SK-N-SH (cell line): ENCODE measurements at regions of chr2 and their contacts with region 1.

Region 1: DNA sequence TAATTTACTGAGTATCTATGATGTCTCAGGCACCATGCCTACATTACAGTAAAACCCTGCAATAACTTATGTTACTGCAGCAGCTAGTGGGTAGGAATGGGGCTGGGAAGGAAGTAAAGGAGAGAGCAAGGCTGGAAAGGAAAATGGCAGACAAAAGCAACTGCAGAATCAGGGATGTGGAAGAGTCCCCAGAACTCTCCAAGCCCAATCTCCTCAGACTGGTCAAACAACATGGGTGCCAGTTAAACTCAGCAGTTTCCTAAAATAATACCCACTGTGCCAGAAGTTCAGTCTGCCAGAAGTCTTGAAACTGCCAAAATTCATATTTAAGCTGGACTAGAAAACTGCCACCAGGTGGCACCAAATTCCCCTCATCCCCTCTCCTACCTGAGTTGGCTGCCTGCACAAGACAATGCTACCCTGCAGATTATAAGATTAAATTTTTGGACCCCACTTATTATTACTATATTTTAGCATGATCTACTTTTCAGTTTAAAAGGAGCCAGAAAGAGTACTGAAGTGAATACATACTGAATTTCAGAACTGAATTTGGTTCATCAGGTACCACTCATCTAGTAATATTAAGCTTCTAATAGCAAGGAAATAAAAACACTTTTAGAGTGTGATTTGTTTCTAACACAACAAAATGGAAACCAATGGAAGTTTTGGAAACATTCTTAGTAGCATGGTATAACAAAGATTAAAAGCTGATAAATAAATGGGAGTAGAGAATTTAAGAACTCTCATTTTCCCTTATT is 86.8 kb upstream of the DNER start:
- DNase-seq: peak; percentile 61
- H3K4me3 ChIP-seq: no peak overlapping the region; a peak in 1 of 4 replicates
- H3K27ac ChIP-seq: peak overlapping the region in 1 of 2 experiments; percentile 40; a peak in 3 of 4 replicates
- H3K4me1 ChIP-seq: peaks cover 0 to 4% of the 10 kb centered on the region in 2 experiments; a peak in 1 of 4 replicates
- H3K27me3 ChIP-seq: no peaks in the 10 kb centered on the region
- CTCF ChIP-seq: peak; percentile 87
- EP300 ChIP-seq: no peak
- RAD21 ChIP-seq: peak; percentile 70

Region 2: DNA sequence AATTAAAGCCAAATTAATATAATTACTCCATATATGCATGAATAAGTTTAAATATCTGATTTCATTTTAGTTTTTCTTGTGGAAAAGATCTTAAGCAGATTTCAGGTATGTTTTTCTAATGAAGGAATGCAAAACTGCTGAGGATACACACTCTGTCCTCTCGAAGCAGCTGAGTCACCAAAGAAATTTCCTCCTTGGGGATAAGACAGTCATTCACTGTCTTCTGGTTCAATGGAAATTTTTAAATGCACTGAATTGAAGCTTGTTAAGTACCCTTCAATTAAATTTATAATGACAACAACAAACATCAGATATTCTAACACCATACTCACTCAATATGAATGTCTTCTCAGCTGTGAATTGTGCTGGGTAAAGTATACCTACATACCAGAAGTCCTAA is 14.7 kb after region 1 on chr2:
- CTCF ChIA-PET with region 1: interaction called, 81 read pairs
- POLR2A ChIA-PET with region 1: interaction called, 3 read pairs
- DNase-seq: no peak
- H3K4me3 ChIP-seq: no peak overlapping the region
- H3K27ac ChIP-seq: peak overlapping the region; percentile 20 to 78; a peak in 3 of 4 replicates
- H3K4me1 ChIP-seq: peaks cover 10 to 15% of the 10 kb centered on the region in 2 experiments; a peak in 3 of 4 replicates
- H3K27me3 ChIP-seq: no peaks in the 10 kb centered on the region
- CTCF ChIP-seq: no peak
- EP300 ChIP-seq: no peak
- RAD21 ChIP-seq: no peak

Region 3: DNA sequence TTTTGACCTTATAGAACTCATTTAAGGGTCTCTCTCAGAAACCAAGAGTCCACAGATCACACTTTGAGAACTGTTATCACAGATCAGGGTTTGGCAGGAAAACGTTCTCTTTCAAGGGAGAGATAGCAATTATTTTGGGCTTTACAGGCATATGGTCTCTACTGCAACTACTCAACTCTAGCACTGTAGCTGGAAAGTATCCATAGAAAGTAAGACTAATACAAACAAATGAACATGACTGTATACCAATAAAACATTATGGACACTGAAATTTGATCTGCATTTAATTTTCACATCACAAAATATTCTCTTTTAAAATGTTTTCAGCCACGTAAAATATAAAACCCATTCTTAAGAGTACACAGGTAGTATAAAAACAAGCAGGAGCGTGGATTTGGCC is 20.1 kb after region 1 on chr2:
- CTCF ChIA-PET with region 1: interaction called, 81 read pairs
- POLR2A ChIA-PET with region 1: no interaction called
- DNase-seq: no peak
- H3K4me3 ChIP-seq: no peak overlapping the region
- H3K27ac ChIP-seq: no peak overlapping the region
- H3K4me1 ChIP-seq: peaks cover 4 to 5% of the 10 kb centered on the region in 2 experiments; a peak in 2 of 4 replicates
- H3K27me3 ChIP-seq: no peaks in the 10 kb centered on the region
- CTCF ChIP-seq: no peak
- EP300 ChIP-seq: no peak
- RAD21 ChIP-seq: no peak

Region 4: DNA sequence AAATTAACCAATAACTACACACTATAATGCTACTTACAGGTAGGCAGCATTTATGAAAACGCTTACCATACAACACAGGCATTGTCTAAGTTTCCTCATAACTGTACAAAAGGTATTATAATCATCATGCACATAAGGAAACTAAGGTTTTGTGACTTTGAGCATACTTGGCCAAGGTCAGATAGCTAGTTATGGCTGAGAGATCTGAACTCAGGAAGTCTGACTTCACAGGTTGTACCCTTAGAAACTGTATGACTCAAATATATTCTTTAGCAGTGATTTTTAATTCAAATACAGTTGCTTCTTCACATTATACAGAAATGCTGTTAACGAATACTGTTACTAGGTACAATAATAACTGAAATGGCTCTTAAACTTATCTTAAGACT is 31.3 kb after region 1 on chr2:
- CTCF ChIA-PET with region 1: interaction called, 27 read pairs
- POLR2A ChIA-PET with region 1: no interaction called
- DNase-seq: no peak
- H3K4me3 ChIP-seq: no peak overlapping the region
- H3K27ac ChIP-seq: no peak overlapping the region
- H3K4me1 ChIP-seq: peaks cover 0 to 3% of the 10 kb centered on the region in 2 experiments; a peak in 2 of 4 replicates
- H3K27me3 ChIP-seq: no peaks in the 10 kb centered on the region
- CTCF ChIP-seq: no peak
- EP300 ChIP-seq: no peak
- RAD21 ChIP-seq: no peak

Region 5: GRCh38 chr2:229910832-229911412 is 109.7 kb after region 1 on chr2:
- CTCF ChIA-PET with region 1: interaction called, 21 read pairs
- POLR2A ChIA-PET with region 1: no interaction called
- DNase-seq: peak; percentile 42
- H3K4me3 ChIP-seq: no peak overlapping the region
- H3K27ac ChIP-seq: no peak overlapping the region
- H3K4me1 ChIP-seq: no peaks in the 10 kb centered on the region; a peak in 2 of 4 replicates
- H3K27me3 ChIP-seq: no peaks in the 10 kb centered on the region
- CTCF ChIP-seq: peak; percentile 49
- EP300 ChIP-seq: no peak
- RAD21 ChIP-seq: peak; percentile 34

Region 6: GRCh38 chr2:230068016-230068650 is 267.0 kb after region 1 on chr2:
- CTCF ChIA-PET with region 1: interaction called, 17 read pairs
- POLR2A ChIA-PET with region 1: no interaction called
- DNase-seq: peak; percentile 82
- H3K4me3 ChIP-seq: peak overlapping the region; percentile 56 to 66
- H3K27ac ChIP-seq: no peak overlapping the region; a peak in 1 of 4 replicates
- H3K4me1 ChIP-seq: no peaks in the 10 kb centered on the region; a peak in 1 of 4 replicates
- H3K27me3 ChIP-seq: no peaks in the 10 kb centered on the region
- CTCF ChIP-seq: peak; percentile 21
- EP300 ChIP-seq: no peak
- RAD21 ChIP-seq: no peak

Region 7: DNA sequence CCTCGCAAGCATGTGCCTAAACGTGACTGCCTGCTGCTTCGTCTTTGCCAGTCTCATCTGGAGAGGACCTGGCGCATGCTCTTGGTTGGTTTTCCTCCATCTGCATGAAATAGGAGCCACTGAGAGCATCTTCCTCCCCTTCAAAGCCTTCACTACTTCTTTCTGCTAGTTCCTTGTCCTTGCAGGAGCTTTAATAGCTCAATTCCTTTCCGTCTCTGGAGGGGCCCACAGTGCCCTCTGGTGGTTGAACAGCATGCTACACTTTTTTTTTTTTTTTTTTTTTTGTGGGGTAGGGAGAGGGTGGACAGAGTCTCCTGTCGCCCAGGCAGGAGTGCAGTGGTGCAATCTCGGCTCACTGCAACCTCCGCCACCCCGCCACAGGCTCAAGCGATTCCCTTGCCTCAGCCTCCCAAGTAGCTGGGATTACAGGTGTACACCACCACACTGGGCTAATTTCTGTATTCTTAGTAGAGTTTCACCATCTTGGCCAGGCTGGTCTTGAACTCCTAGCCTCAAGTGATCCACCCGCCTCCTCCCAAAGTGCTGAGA is 359.0 kb after region 1 on chr2:
- CTCF ChIA-PET with region 1: interaction called, 12 read pairs
- POLR2A ChIA-PET with region 1: no interaction called
- DNase-seq: peak; percentile 71
- H3K4me3 ChIP-seq: no peak overlapping the region
- H3K27ac ChIP-seq: no peak overlapping the region
- H3K4me1 ChIP-seq: peaks cover 0 to 3% of the 10 kb centered on the region in 2 experiments; a peak in 1 of 4 replicates
- H3K27me3 ChIP-seq: no peaks in the 10 kb centered on the region
- CTCF ChIP-seq: peak; percentile 83
- EP300 ChIP-seq: no peak
- RAD21 ChIP-seq: peak; percentile 72